Left ventricle myocardium inferior (tissue), 1 donor: ENCODE measurements at regions of chr19 and their contacts with region 1.

Region 1: GRCh38 chr19:23249911-23250649 is at the start of gene ZNF724:
- DNase-seq: peak; percentile 93
- H3K4me3 ChIP-seq: peak within 1 kb of the TSS; percentile 78
- H3K27ac ChIP-seq: peak within 1 kb of the TSS; percentile 70
- H3K4me1 ChIP-seq: peaks cover 16% of the 10 kb centered on the region
- H3K27me3 ChIP-seq: no peaks in the 10 kb centered on the region
- CTCF ChIP-seq: no peak
- total RNA-seq, gene ZNF724: 1.9 TPM

Region 2: DNA sequence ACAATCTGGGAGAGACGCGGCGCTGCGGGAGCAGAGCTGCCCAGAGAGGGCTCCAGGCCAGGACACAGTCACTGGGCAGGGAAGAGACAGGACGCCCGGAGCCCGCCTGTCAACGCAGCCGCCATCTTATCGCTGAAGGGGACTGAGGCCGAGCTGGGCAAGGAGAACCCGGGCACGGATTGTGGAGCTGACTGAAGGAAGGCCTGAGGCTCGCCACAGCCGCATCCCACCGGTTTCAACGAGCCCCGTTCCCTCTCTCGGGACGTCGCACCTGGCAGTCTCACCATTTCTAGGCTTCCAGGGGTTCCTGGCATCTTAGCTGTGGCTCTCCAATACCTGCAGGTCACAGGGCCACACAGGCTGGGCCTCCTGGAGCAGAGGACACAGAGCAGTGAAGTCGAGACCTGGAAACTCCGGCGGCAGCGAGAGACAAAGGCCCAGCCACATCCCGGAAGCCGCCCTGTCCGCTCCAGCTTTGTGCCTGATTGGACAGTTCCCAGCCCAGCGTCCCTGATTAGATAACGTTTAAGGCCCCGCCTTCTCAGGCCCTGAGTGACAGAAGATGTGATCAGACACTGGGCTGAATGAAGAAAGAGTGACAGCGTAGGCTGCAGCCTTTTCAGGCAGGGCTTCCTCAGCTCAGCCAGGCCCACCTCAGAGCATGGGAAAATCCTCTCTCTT is 145.1 kb after region 1 on chr19 and contains the start of gene ZNF91:
- intact Hi-C with region 1: loop called (anchors 10 kb)
- DNase-seq: peak; percentile 94
- H3K4me3 ChIP-seq: peak within 1 kb of the TSS; percentile 86
- H3K27ac ChIP-seq: peak within 1 kb of the TSS; percentile 97
- H3K4me1 ChIP-seq: peaks cover 55% of the 10 kb centered on the region
- H3K27me3 ChIP-seq: no peaks in the 10 kb centered on the region
- CTCF ChIP-seq: no peak
- total RNA-seq, gene ZNF91: 101 TPM